Activated naive CD4-positive, alpha-beta T cell treated with anti-CD3 and anti-CD28 coated beads, Interleukin-2, amount 10 ng/mL, durations not matched to agents 7 days and 5 days (primary cell): ENCODE measurements at regions of chr3 and their contacts with region 1.

Region 1: DNA sequence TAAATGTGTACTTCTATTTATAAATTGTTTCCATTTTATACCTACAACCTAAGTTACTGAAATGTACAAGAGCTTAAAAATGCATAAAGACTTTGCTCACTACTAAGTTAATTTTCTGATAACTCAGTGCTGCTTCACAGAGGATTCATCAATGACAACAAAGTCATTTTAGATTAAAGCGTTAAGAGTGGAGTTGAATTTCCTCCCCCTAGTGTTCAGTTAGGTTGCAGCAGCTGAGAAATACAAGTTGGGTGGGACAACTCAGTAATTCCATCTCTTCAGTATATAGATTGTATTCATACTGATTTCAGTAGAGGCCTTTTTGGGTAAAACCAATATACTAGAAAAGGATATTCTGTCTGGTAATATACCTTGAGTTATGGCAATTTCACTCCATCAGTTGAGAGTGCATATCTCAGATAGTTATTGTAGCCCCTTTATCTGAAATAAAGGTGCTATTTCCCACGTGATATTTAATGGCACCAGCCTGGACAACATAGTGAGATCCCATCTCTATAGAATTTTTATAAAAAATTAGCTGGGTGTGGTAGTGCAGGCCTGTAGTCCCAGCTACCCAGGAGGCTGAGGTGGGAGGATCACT is 6.9 kb upstream of the RPL35A start:
- DNase-seq: peak; percentile 40
- H3K4me3 Mint-ChIP-seq: no peak overlapping the region
- H3K27ac Mint-ChIP-seq: no peak overlapping the region
- H3K4me1 Mint-ChIP-seq: peaks cover 3% of the 10 kb centered on the region
- H3K27me3 Mint-ChIP-seq: peaks cover 5% of the 10 kb centered on the region

Region 2: GRCh38 chr3:197906023-197906849 is 36.8 kb before region 1 on chr3:
- CTCF ChIA-PET with region 1: interaction called, 23 read pairs
- DNase-seq: peak; percentile 84
- H3K4me3 Mint-ChIP-seq: no peak overlapping the region
- H3K27ac Mint-ChIP-seq: no peak overlapping the region
- H3K4me1 Mint-ChIP-seq: peaks cover 6% of the 10 kb centered on the region
- H3K27me3 Mint-ChIP-seq: no peaks in the 10 kb centered on the region